Activated CD4-positive, alpha-beta T cell treated with anti-CD3 and anti-CD28 coated beads for 36 hours (primary cell): ENCODE measurements at regions of chr13 and their contacts with region 1.

Region 1: DNA sequence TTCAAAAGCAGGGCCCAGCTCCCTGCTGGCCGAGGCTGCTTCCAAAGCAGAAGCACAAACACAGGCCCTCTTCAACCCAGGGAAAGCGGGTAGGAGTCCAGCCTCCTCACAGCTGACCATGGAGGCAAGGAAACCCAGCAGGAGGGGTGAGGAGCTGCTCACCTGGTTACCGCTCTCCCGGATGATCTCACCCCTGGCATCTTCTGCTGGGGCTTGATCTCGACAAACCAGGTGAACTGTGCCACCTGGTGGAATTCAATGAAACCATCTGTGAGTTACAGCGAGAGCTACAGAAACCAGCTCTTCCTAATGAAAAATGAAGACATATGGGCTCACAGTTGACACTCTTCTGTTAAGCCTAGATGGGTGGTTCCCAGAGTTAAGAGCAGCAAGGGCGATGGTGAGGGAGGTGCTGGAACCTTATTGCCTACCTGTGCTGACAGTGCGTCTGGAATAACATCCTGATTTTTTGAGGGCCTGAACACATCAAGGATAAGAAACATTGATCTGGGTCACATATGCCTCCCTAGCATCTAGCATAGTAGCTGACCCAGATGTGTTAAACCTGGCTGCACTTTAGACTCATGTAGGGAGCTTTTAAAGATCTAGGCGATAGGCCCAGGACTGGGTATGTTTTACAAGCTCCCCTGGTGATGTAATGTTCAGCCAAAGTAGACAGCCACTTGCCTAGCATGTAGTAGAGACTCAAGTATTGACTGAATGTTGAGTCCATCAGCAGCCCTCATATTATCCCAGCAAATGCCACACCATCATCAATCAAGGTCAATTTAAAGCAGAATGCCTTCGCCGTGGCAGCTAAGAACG is 6.1 kb downstream of the DHRS12 start:
- DNase-seq: peak; percentile 79
- ATAC-seq: peak; percentile 51
- H3K4me3 Mint-ChIP-seq: no peak overlapping the region
- H3K27ac Mint-ChIP-seq: no peak overlapping the region
- H3K4me1 Mint-ChIP-seq: peaks cover 41% of the 10 kb centered on the region
- H3K27me3 Mint-ChIP-seq: no peaks in the 10 kb centered on the region

Region 2: GRCh38 chr13:50268500-50268899 is 1529.4 kb before region 1 on chr13:
- CTCF ChIA-PET with region 1: no interaction called
- POLR2A ChIA-PET with region 1: no interaction called
- intact Hi-C with region 1: no loop called
- DNase-seq: no peak
- ATAC-seq: no peak
- H3K4me3 Mint-ChIP-seq: no peak overlapping the region
- H3K27ac Mint-ChIP-seq: no peak overlapping the region
- H3K4me1 Mint-ChIP-seq: no peaks in the 10 kb centered on the region
- H3K27me3 Mint-ChIP-seq: peaks cover 10% of the 10 kb centered on the region

Region 3: GRCh38 chr13:51154029-51154555 is 643.8 kb before region 1 on chr13:
- CTCF ChIA-PET with region 1: interaction called, 9 read pairs
- POLR2A ChIA-PET with region 1: no interaction called
- intact Hi-C with region 1: loop called in 1 of 2 experiments (anchors 10 kb)
- DNase-seq: peak; percentile 53
- ATAC-seq: peak; percentile 81
- H3K4me3 Mint-ChIP-seq: peak overlapping the region; percentile 8
- H3K27ac Mint-ChIP-seq: peak overlapping the region; percentile 29
- H3K4me1 Mint-ChIP-seq: peaks cover 20% of the 10 kb centered on the region
- H3K27me3 Mint-ChIP-seq: peaks cover 13% of the 10 kb centered on the region

Region 4: GRCh38 chr13:51425410-51426042 is 372.4 kb before region 1 on chr13:
- CTCF ChIA-PET with region 1: interaction called, 13 read pairs
- POLR2A ChIA-PET with region 1: no interaction called
- intact Hi-C with region 1: no loop called
- DNase-seq: no peak
- ATAC-seq: no peak
- H3K4me3 Mint-ChIP-seq: no peak overlapping the region
- H3K27ac Mint-ChIP-seq: no peak overlapping the region
- H3K4me1 Mint-ChIP-seq: peaks cover 72% of the 10 kb centered on the region
- H3K27me3 Mint-ChIP-seq: no peaks in the 10 kb centered on the region

Region 5: DNA sequence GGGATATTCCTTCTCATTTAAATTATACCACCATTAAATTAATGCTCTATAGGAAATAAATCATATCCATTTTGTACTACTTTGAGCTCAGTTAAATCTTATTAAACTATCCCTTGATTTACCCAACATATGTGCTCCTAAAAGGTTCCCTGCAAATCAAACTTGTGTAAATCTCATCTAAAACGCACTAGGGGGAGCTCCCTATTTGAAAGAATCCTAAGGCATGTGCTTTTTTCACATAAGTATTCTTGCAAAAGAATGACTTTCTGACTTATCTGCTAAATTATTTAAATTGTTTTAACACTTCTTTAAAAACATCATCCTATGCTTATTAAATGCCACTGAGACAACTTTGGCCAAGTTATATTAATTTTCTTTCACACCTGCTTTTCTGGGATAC is 353.0 kb before region 1 on chr13:
- CTCF ChIA-PET with region 1: interaction called, 10 read pairs
- POLR2A ChIA-PET with region 1: no interaction called
- intact Hi-C with region 1: loop called in 1 of 2 experiments (anchors 2 kb)
- DNase-seq: no peak
- ATAC-seq: no peak
- H3K4me3 Mint-ChIP-seq: no peak overlapping the region
- H3K27ac Mint-ChIP-seq: no peak overlapping the region
- H3K4me1 Mint-ChIP-seq: peaks cover 17% of the 10 kb centered on the region
- H3K27me3 Mint-ChIP-seq: no peaks in the 10 kb centered on the region

Region 6: DNA sequence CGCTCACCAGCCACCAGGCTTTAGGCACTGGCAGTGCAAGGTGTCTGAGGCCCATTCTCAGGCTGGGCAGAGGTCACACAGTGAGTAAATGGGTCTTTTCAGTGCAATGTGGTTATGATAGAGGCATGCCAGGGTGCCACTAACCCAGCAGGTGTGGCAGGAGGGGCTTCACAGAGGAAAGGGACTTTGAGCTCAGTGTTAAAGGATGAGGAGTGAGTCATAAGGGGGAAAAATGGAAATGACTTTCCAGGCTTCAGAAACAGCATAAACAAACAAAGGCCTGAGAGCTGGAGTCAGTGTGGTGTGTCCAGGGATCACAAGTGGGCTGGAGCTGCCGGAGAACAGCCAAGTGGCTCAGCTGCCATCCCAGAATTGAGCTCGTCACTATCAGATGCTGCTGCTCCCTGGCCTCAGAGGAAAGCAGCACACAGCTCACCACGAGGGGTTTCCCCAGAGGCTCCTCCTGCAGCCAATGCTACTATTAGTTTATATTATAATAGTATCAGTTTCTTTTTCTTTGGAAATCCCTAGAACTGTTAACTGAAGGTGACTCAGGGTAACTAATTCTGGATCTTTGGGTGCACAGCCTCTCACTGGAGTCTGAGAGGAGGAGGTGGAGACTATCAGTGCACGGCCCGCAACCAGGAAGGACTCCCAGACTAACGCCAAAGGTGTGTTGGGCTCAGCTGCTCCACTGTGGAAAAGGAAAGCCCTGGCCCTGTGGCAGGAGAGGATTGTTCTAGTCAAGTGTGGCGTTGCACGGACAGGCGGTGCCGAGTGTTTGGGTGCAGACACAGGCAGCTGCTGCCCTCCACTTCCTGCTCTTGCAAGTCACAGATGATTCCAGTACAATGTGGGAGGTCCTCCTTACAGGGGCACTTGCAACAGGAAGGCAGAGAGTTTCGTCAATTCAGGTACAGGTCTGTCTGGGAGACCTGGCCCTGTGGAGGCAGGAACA is 33.4 kb before region 1 on chr13:
- CTCF ChIA-PET with region 1: interaction called, 10 read pairs
- POLR2A ChIA-PET with region 1: interaction called, 3 read pairs
- intact Hi-C with region 1: loop called in 1 of 2 experiments (anchors 2 kb)
- DNase-seq: peak; percentile 83
- ATAC-seq: peak; percentile 91
- H3K4me3 Mint-ChIP-seq: peak overlapping the region; percentile 74
- H3K27ac Mint-ChIP-seq: peak overlapping the region; percentile 97
- H3K4me1 Mint-ChIP-seq: peaks cover 45% of the 10 kb centered on the region
- H3K27me3 Mint-ChIP-seq: no peaks in the 10 kb centered on the region